PC-9 (cell line): ENCODE measurements at regions of chr4 and their contacts with region 1.

Region 1: GRCh38 chr4:110153691-110154090 is 44.7 kb downstream of the ELOVL6 start:
- DNase-seq: no peak
- H3K4me3 ChIP-seq: no peak overlapping the region
- H3K27ac ChIP-seq: no peak overlapping the region
- H3K4me1 ChIP-seq: peaks cover 19% of the 10 kb centered on the region
- H3K27me3 ChIP-seq: no peaks in the 10 kb centered on the region
- CTCF ChIP-seq: no peak

Region 2: GRCh38 chr4:109588176-109588575 is 565.5 kb before region 1 on chr4:
- CTCF ChIA-PET with region 1: no interaction called
- POLR2A ChIA-PET with region 1: no interaction called
- intact Hi-C with region 1: no loop called
- DNase-seq: no peak
- H3K4me3 ChIP-seq: no peak overlapping the region
- H3K27ac ChIP-seq: no peak overlapping the region
- H3K4me1 ChIP-seq: peaks cover 5% of the 10 kb centered on the region; the same call in 1 of the 2 replicates
- H3K27me3 ChIP-seq: no peaks in the 10 kb centered on the region
- CTCF ChIP-seq: no peak

Region 3: DNA sequence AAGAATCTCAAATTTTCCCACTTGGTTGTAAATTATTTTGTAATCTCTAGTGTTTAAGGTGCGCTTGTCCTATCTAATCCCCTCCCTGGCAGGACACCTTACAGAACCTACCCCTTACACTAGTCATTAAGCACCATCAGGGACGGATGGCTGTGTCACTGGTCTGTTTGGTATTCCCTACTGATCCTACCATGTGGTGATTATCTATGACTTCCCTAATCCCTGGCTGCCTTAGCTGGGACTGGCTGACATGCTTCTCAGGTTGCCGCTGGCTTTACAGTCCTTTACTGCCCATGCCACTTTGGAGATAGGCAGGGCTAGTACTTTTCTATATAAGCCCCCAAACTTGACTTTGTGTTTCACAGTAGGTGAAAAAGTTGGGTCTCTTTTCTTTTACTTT is 13.9 kb before region 1 on chr4:
- CTCF ChIA-PET with region 1: no interaction called
- POLR2A ChIA-PET with region 1: no interaction called
- intact Hi-C with region 1: no loop called
- DNase-seq: no peak
- H3K4me3 ChIP-seq: no peak overlapping the region
- H3K27ac ChIP-seq: no peak overlapping the region
- H3K4me1 ChIP-seq: no peaks in the 10 kb centered on the region
- H3K27me3 ChIP-seq: no peaks in the 10 kb centered on the region
- CTCF ChIP-seq: no peak

Region 4: GRCh38 chr4:111018216-111018615 is 864.5 kb after region 1 on chr4:
- CTCF ChIA-PET with region 1: no interaction called
- POLR2A ChIA-PET with region 1: interaction called, 10 read pairs
- intact Hi-C with region 1: no loop called
- DNase-seq: no peak
- H3K4me3 ChIP-seq: no peak overlapping the region
- H3K27ac ChIP-seq: no peak overlapping the region
- H3K4me1 ChIP-seq: no peaks in the 10 kb centered on the region
- H3K27me3 ChIP-seq: no peaks in the 10 kb centered on the region
- CTCF ChIP-seq: no peak